HEK293 (cell line): ENCODE measurements at regions of chr11 and their contacts with region 1.

Region 1: DNA sequence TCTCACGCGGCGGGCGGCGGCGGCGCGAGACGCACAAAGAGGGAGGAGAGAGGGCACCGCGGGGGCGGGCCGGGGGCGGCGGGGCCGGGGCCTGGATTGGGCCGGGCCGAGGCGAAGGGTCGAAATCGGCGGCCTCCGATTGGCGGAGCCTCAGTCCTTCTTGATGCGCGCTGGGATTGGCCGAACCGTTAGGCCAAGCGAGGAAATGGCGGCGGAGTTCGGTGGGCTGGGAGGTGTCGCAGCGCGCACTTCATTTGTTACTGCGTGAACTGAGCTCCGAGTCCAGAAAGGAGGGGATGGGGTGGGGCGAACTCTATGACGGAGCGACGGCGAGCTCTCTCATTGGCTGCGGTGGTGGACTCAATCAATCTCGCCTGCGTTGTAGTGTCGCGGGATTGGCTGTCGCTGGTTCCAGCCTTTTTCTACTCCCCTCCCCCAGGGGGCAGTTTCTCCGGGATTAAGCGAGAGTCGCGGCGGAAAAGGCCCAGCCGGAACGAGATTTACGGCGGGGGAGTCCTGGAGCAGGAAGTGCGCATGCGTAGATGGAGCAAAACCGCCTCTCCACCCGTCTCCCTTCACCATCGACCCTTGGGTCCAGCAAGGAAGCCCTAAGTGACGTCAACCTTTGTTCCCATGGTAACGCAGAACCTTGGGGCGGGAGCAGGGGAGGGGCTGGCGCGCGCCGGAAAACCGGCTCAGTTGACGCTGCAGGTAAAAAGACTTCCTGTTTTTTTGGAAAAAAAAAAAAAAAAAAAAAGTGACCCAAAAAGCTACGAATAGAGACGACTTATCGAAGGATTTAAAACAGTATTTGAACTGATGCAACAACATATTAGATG is at the start of gene SF1:
- H3K4me3 ChIP-seq: peak within 1 kb of the TSS; percentile 96
- H3K27ac ChIP-seq: peak within 1 kb of the TSS; percentile 97
- H3K4me1 ChIP-seq: no peaks in the 10 kb centered on the region
- CTCF ChIP-seq: peak; percentile 41; the same call in 1 of the 2 replicates

Region 2: DNA sequence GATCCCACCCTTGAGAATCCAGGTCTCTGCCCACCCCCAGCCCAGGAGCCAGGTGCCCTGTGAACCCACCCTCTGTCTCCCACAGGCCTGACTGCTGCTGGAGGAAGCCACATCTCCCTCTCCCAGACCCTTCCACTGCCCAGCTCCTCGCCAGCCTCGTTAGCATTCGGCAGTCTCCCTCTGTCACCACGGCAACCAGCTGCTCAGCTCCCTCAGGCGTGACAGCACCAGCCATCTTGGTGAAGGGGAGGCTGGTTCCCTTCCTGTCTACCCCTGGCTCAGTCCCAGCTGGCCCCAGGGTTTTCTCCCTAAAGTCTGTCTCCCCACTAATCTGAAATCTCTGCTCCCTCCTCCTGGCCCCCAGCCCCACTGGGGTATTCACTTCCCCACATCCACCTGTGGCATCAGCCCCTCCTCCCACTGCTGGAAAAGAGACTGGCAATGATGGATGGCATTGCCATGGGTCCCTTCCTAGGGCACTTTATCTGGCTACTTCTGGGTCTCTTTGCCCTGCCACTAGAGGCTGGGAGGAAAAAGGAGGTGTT is 83.8 kb before region 1 on chr11:
- CTCF ChIA-PET with region 1: no interaction called
- POLR2A ChIA-PET with region 1: no interaction called
- H3K4me3 ChIP-seq: no peak overlapping the region
- H3K27ac ChIP-seq: no peak overlapping the region
- H3K4me1 ChIP-seq: no peaks in the 10 kb centered on the region
- CTCF ChIP-seq: no peak

Region 3: GRCh38 chr11:64767344-64768299 is 11.1 kb before region 1 on chr11:
- CTCF ChIA-PET with region 1: interaction called, 13 read pairs
- POLR2A ChIA-PET with region 1: interaction called, 42 read pairs
- H3K4me3 ChIP-seq: no peak overlapping the region
- H3K27ac ChIP-seq: no peak overlapping the region
- H3K4me1 ChIP-seq: peaks cover 7% of the 10 kb centered on the region
- CTCF ChIP-seq: peak; percentile 56

Region 4: DNA sequence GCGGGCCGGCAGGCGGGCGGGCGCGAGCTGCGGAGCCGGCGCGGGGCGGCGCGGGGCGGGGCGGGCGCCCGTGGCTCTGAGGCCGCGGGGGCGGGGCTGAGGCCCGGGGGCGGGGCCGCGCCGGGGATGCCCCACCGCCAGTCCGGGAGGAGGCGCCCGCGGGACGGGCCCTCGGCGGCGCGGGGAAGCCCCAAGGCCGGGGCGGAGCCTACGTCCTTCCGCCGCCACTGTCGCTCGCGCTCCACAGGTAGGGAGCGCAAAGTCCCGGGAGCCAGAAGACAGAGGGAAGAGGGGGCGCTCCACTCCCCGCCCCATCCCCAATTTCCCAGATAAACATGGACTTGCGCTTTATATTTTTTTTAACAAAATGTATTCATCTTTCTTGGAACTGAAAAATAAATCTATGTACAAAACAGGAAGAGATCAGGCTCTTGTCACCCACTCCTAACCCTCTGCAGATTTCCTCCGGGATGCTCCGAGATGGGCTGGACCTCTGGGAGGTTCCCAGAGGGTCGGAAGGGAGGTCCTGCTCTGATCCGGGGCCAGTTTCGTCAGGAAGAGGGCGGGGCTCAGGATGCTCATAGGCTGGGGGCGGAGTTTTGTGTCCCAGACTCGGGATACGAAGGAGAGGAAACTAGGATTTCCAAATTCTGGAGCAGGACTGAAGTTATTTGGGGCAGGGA is 24.6 kb after region 1 on chr11 and contains the start of gene MAP4K2:
- CTCF ChIA-PET with region 1: interaction called, 3 read pairs
- POLR2A ChIA-PET with region 1: interaction called, 24 read pairs
- H3K4me3 ChIP-seq: peak within 1 kb of the TSS; percentile 47
- H3K27ac ChIP-seq: no peak within 1 kb of the TSS; the same call in 1 of the 2 replicates
- H3K4me1 ChIP-seq: peaks cover 4% of the 10 kb centered on the region
- CTCF ChIP-seq: peak; percentile 44

Region 5: GRCh38 chr11:64834723-64835620 is 56.2 kb after region 1 on chr11:
- CTCF ChIA-PET with region 1: interaction called, 3 read pairs
- POLR2A ChIA-PET with region 1: interaction called, 11 read pairs
- H3K4me3 ChIP-seq: no peak overlapping the region
- H3K27ac ChIP-seq: no peak overlapping the region
- H3K4me1 ChIP-seq: no peaks in the 10 kb centered on the region
- CTCF ChIP-seq: no peak

Region 6: GRCh38 chr11:64878494-64879243 is 99.9 kb after region 1 on chr11 and contains the start of gene EHD1:
- CTCF ChIA-PET with region 1: interaction called, 4 read pairs
- POLR2A ChIA-PET with region 1: interaction called, 12 read pairs
- H3K4me3 ChIP-seq: peak within 1 kb of the TSS; percentile 85
- H3K27ac ChIP-seq: peak within 1 kb of the TSS; percentile 64; the same call in 1 of the 2 replicates
- H3K4me1 ChIP-seq: no peaks in the 10 kb centered on the region
- CTCF ChIP-seq: peak; percentile 89